ENCODE measurements at regions of chr5 and their contacts with region 1.

Region 1: GRCh38 chr5:179821581-179822432 is 1.1 kb downstream of the SQSTM1 start:
- DNase-seq: peak; percentile 87
- ATAC-seq: peak; percentile 65
- H3K4me3 Mint-ChIP-seq: peak overlapping the region; percentile 90
- H3K27ac Mint-ChIP-seq: peak overlapping the region; percentile 96
- H3K4me1 Mint-ChIP-seq: peaks cover 29% of the 10 kb centered on the region
- H3K27me3 Mint-ChIP-seq: no peaks in the 10 kb centered on the region

Region 2: DNA sequence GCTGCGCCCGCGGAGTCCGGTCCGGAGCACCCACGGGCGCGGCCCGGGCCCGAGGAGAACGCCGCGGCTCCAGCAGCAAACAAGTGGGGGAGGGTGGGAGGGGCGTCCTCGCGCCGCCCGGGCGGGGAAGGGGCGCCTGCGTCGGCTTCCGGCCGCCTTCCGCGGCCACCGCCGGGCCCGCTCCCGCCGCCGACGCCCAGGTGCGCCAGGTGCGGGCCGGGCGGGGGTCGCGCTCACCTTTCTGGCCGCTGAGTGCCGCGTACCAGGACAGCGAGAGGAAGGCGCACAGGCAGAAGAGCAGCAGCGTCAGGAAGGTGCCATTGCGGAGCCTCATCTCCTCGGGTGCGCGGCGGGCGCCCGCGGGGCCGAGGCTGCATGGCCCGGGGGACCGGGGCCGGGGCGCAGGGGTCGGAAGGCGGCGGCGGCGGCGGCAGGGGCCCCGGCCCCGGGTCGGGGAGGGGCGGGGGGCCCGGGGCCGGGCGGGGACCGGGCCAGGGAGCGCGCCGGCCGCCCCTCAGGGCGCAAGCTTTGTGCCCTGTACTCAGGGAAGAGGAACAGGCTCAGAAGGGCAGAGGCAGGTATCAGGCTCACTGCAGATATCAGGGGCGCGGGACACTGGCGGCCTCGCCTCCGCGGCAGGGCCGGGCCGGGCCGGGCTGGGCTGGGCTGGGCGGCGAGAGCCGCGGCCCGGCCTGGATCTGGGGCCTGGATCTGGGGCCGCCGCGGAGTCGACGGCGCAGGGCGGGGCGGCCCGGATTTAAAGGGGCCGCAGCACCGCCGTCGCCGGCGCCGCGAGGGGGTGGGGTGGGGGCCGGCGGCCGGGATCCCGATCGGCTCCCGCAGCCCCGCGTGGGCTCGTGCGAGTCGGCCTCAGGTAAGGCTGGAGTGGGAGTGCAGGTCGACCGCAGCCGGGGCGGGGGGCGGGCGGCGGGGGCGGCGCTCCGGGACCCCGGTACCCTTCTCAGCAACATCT is 15.3 kb before region 1 on chr5 and contains the start of gene MGAT4B:
- POLR2A ChIA-PET with region 1: interaction called, 42 read pairs
- DNase-seq: peak; percentile 84
- ATAC-seq: peak; percentile 84
- H3K4me3 Mint-ChIP-seq: peak within 1 kb of the TSS; percentile 74
- H3K27ac Mint-ChIP-seq: peak within 1 kb of the TSS; percentile 73
- H3K4me1 Mint-ChIP-seq: peaks cover 30% of the 10 kb centered on the region
- H3K27me3 Mint-ChIP-seq: no peaks in the 10 kb centered on the region
- total RNA-seq, gene MGAT4B: 118 TPM

Region 3: GRCh38 chr5:179836225-179837019 is 14.6 kb after region 1 on chr5:
- POLR2A ChIA-PET with region 1: interaction called, 14 read pairs
- DNase-seq: peak; percentile 60
- ATAC-seq: peak; percentile 96
- H3K4me3 Mint-ChIP-seq: peak overlapping the region; percentile 66
- H3K27ac Mint-ChIP-seq: peak overlapping the region; percentile 89
- H3K4me1 Mint-ChIP-seq: peaks cover 13% of the 10 kb centered on the region
- H3K27me3 Mint-ChIP-seq: no peaks in the 10 kb centered on the region

Region 4: GRCh38 chr5:179907570-179908324 is 85.9 kb after region 1 on chr5 and contains the start of gene TBC1D9B:
- POLR2A ChIA-PET with region 1: interaction called, 10 read pairs
- DNase-seq: peak; percentile 85
- ATAC-seq: peak; percentile 89
- H3K4me3 Mint-ChIP-seq: peak within 1 kb of the TSS; percentile 91
- H3K27ac Mint-ChIP-seq: peak within 1 kb of the TSS; percentile 83
- H3K4me1 Mint-ChIP-seq: peaks cover 3% of the 10 kb centered on the region
- H3K27me3 Mint-ChIP-seq: no peaks in the 10 kb centered on the region
- total RNA-seq, gene TBC1D9B: 98.8 to 99.4 TPM

Measured in activated naive CD8-positive, alpha-beta T cell treated with anti-CD3 and anti-CD28 coated beads, Interleukin-2, amount 10 ng/mL, durations not matched to agents 7 days and 5 days (primary cell).